ENCODE measurements at regions of chr11 and their contacts with region 1.

Region 1: GRCh38 chr11:83071567-83072349 is at the start of gene RAB30:
- DNase-seq: peak; percentile 100
- ATAC-seq: peak; percentile 93
- H3K4me3 ChIP-seq: peak within 1 kb of the TSS; percentile 86
- H3K27ac ChIP-seq: peak within 1 kb of the TSS; percentile 63
- H3K4me1 ChIP-seq: peaks cover 38% of the 10 kb centered on the region
- H3K27me3 ChIP-seq: no peaks in the 10 kb centered on the region
- CTCF ChIP-seq: no peak
- total RNA-seq, gene RAB30: 6.6 and 8.2 TPM in 2 replicates

Region 2: GRCh38 chr11:82906244-82906654 is 165.5 kb before region 1 on chr11:
- CTCF ChIA-PET with region 1: no interaction called
- POLR2A ChIA-PET with region 1: no interaction called
- intact Hi-C with region 1: loop called (anchors 1 kb)
- DNase-seq: peak; percentile 64
- ATAC-seq: no peak
- H3K4me3 ChIP-seq: no peak overlapping the region
- H3K27ac ChIP-seq: no peak overlapping the region
- H3K4me1 ChIP-seq: peaks cover 18% of the 10 kb centered on the region
- H3K27me3 ChIP-seq: no peaks in the 10 kb centered on the region
- CTCF ChIP-seq: peak; percentile 89

Region 3: DNA sequence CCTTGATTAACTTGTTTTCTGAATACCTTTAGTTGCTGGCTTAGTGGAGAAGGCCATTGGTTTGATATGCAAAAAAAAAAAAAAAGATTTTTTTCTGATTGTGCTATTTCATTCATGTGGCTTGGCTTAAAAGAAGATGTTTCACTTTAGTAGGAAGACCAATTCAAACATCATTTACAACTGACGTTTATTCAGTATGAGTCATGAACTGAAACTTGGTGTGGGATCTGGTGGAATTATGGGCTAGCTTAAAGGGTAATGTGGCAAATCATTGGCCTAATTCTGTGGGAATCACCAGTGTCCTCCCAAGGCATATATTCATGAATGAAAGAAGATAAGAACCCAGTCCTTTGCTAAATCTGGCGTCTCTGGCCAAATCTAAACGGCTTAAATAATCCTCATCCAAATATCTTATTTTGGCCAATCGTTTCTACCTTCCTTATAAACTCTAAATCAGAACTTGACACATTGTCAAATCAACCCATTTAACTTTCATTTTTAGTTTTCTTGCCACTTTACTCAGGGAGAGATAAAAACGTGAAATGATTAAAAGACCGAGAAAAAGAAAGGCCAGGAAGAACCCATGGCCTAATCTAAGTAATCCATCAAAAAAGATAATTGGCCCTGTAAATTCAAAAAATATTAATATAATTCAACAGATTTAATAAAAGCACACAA is 93.2 kb before region 1 on chr11:
- CTCF ChIA-PET with region 1: no interaction called
- POLR2A ChIA-PET with region 1: no interaction called
- intact Hi-C with region 1: loop called (anchors 5 kb)
- DNase-seq: peak; percentile 92
- ATAC-seq: peak; percentile 64
- H3K4me3 ChIP-seq: no peak overlapping the region
- H3K27ac ChIP-seq: peak overlapping the region; percentile 80
- H3K4me1 ChIP-seq: peaks cover 56% of the 10 kb centered on the region
- H3K27me3 ChIP-seq: no peaks in the 10 kb centered on the region
- CTCF ChIP-seq: no peak

Region 4: DNA sequence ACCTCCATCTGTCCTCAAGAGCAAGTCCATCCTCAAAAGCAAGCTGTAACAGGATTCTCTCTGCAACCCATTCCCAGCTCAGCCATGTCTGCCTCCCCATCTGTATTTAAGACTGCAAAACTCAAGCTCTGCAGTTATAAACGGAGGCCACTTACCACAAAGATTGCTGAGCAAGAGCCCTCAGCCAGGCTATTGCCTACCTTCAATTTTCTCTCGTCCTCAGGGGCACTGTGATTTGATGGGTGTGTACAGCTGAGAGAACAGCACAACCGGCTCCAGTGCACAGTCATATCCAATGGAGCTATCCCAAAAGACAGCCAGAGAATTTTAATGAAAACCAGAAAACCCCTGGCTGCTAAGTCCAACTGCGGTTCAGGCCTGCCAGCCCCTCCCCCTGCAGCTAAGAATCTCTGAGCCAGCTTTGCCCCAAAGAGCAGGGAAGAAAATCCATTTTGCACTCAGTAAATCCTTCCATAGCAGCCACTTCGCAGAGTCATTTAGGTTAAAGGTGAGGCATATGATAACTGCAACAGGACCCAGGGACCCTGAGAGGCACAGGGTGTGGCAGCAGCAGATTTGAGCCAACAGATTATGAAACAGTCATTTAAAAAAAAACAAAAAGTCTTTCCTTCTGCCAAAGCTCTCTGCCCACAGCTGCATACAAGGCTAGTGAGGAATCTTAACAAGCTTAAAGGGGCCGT is 37.6 kb before region 1 on chr11:
- CTCF ChIA-PET with region 1: no interaction called
- POLR2A ChIA-PET with region 1: interaction called, 12 read pairs
- intact Hi-C with region 1: loop called (anchors 1 kb)
- DNase-seq: peak; percentile 73
- ATAC-seq: peak; percentile 73
- H3K4me3 ChIP-seq: peak overlapping the region; percentile 26
- H3K27ac ChIP-seq: peak overlapping the region; percentile 64
- H3K4me1 ChIP-seq: peaks cover 21% of the 10 kb centered on the region
- H3K27me3 ChIP-seq: no peaks in the 10 kb centered on the region
- CTCF ChIP-seq: no peak

Region 5: GRCh38 chr11:83156150-83156995 is 84.6 kb after region 1 on chr11:
- CTCF ChIA-PET with region 1: no interaction called
- POLR2A ChIA-PET with region 1: interaction called, 3 read pairs
- intact Hi-C with region 1: loop called (anchors 1 kb)
- DNase-seq: peak; percentile 100
- ATAC-seq: peak; percentile 89
- H3K4me3 ChIP-seq: peak overlapping the region; percentile 75
- H3K27ac ChIP-seq: peak overlapping the region; percentile 76
- H3K4me1 ChIP-seq: peaks cover 12% of the 10 kb centered on the region
- H3K27me3 ChIP-seq: no peaks in the 10 kb centered on the region
- CTCF ChIP-seq: no peak

Region 6: GRCh38 chr11:83566948-83567347 is 495.2 kb after region 1 on chr11:
- CTCF ChIA-PET with region 1: no interaction called
- POLR2A ChIA-PET with region 1: no interaction called
- intact Hi-C with region 1: no loop called
- DNase-seq: peak; percentile 40
- ATAC-seq: no peak
- H3K4me3 ChIP-seq: no peak overlapping the region
- H3K27ac ChIP-seq: no peak overlapping the region
- H3K4me1 ChIP-seq: no peaks in the 10 kb centered on the region
- H3K27me3 ChIP-seq: no peaks in the 10 kb centered on the region
- CTCF ChIP-seq: no peak